ENCODE measurements at regions of chr1 and their contacts with region 1.

Region 1: GRCh38 chr1:183281553-183282091 is 95.6 kb downstream of the LAMC2 start:
- DNase-seq: peak; percentile 80
- CTCF ChIP-seq: peak; percentile 88

Region 2: DNA sequence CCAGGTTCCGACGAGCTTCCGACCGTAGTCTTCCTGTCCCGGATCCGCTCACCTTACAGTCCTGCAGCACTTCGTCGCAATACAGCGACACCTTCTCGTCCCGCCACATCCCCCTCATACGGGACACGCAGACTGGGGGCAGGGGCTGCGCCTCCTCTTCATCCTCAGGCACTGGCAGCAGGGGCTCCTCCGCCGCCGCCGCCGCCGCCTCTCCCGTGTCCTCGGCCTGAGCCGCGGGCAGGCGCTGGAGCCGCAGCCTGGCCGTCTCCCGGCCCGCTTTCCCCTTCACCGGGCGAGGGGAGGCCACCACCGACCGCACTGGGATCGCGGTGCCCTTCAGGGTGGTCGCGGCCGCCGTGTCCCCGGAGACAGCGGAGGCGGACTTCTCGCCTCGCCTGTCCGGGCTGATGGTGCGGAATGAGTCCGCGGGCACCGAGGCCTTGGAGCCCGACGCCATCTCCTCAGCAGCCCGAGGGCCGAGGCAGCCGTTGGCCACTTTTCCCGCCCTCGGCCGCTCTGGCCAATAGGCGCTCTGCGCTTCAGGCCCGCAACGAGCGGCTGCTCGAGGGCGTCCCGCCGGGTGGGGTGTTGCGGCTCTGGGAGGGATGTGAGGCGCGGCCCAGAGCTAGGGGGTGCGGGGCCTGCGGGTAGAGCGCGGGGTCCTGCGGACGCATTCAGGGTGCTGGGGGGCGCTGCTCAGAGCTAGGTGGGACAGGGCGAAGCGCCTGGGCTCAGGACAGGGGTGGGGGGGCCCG is 328.8 kb before region 1 on chr1 and contains the start of gene SHCBP1L:
- CTCF ChIA-PET with region 1: no interaction called
- POLR2A ChIA-PET with region 1: no interaction called
- DNase-seq: no peak
- CTCF ChIP-seq: no peak

Region 3: DNA sequence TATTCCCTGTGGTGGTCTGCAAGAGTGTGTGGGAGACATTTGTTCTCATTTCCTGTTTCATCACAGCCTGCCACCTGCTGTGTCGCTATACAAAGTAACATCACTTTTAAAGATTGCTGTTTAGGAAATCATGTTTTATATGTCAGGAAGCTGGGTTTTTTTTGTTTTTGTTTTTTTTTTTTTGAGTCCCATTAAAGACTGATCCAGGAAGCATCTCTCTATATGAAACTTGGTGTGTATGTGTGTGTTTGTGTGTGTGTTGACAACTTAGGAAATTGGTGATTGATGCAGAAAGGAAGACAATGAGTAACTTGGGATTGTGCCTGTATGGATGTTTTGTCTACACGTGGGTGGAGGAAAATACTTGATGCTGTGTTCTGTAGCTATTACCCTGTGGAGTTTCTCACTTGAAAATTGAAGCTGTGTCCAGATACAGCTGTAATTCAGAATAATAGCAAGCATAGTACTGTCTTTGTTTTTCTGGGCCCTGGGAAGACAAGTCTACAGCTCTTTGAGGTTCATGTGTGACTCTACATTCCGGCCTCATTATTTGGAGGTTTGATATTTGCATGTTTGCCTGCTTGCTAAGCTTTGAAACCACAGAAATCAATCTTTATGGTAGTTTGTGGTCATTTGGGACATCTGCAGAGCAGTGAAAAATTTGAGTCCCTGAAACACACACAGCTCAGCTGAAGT is 210.6 kb before region 1 on chr1:
- CTCF ChIA-PET with region 1: no interaction called
- POLR2A ChIA-PET with region 1: no interaction called
- DNase-seq: peak; percentile 64
- CTCF ChIP-seq: peak; percentile 15

Region 4: DNA sequence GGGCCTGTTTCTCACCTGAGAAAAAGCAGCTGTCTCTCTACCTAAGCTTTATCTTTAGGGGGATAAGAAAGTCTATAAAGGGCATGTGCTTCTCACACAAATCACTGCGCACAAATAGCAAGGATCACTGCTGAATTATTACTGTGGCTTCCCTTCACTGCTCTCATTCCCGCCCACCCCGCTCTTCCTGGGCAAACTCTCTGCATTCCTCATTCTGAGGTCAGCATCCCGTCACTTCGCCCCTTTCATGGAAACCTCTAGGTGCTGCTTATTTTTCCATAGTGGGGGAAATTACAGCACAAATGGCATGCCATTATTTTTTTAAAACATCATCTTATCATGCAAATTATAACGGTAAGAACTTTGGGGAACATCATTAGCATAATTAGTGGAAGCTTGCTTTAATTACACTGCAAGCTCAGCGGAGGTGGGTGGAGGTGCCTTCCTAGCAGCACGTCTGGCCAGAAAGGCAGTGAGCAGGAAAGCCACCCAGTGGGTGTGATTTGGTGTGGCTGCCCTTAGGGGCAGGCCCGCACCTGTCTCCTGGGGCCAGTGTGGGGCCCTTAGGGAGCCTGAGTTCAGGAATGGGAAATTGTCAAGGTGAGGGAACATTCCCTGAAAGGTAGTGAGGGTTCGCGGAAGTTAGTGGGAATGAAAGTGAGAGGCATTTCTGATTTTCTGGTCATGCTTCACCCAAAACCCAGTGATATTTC is 10.3 kb after region 1 on chr1:
- CTCF ChIA-PET with region 1: interaction called, 18 read pairs
- POLR2A ChIA-PET with region 1: no interaction called
- DNase-seq: no peak
- CTCF ChIP-seq: no peak

Region 5: GRCh38 chr1:183306317-183307042 is 24.9 kb after region 1 on chr1:
- CTCF ChIA-PET with region 1: interaction called, 15 read pairs
- POLR2A ChIA-PET with region 1: no interaction called
- DNase-seq: no peak
- CTCF ChIP-seq: peak; percentile 22

Region 6: GRCh38 chr1:183318433-183318832 is 36.8 kb after region 1 on chr1:
- CTCF ChIA-PET with region 1: interaction called, 64 read pairs
- POLR2A ChIA-PET with region 1: no interaction called
- DNase-seq: peak; percentile 69
- CTCF ChIP-seq: peak; percentile 62

Measured in GM10248 (cell line).